PC-9 (cell line): ENCODE measurements at regions of chr4 and their contacts with region 1.

Region 1: GRCh38 chr4:113434247-113434587 is 327.3 kb downstream of the CAMK2D start:
- DNase-seq: no peak
- H3K4me3 ChIP-seq: no peak overlapping the region
- H3K27ac ChIP-seq: no peak overlapping the region
- H3K4me1 ChIP-seq: no peaks in the 10 kb centered on the region
- H3K27me3 ChIP-seq: no peaks in the 10 kb centered on the region
- CTCF ChIP-seq: no peak

Region 2: GRCh38 chr4:113384600-113384999 is 49.6 kb before region 1 on chr4:
- CTCF ChIA-PET with region 1: no interaction called
- POLR2A ChIA-PET with region 1: no interaction called
- intact Hi-C with region 1: no loop called
- DNase-seq: no peak
- H3K4me3 ChIP-seq: no peak overlapping the region
- H3K27ac ChIP-seq: no peak overlapping the region
- H3K4me1 ChIP-seq: no peaks in the 10 kb centered on the region
- H3K27me3 ChIP-seq: no peaks in the 10 kb centered on the region
- CTCF ChIP-seq: no peak

Region 3: DNA sequence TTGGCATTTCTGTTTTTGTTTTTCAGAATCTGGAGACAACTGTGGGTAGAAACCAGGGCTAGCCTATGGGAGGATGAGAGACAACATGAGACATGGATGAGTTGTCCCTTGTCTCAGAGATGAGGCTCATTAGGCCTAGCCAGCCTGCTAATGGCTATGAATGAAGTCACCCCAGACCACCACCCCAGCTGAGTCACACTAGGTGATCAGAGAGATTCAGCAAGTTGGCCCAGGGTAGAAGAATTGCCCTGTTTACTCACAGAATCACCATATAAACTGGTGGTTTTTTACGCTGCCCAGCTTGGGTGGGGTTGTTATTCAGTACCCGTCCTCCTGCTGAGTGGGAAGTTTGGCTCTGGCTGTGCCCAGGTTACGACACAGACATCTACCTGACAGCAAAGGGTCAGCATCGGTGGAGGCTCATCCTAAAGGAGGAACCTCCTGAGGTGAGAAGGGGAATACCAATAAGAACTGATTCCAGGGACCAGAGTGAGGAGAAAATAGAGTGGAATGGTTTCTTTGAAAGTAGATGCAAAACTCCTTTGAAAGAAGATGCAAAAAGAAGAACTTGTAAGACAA is 562.5 kb after region 1 on chr4:
- CTCF ChIA-PET with region 1: interaction called, 14 read pairs
- POLR2A ChIA-PET with region 1: no interaction called
- intact Hi-C with region 1: no loop called
- DNase-seq: no peak
- H3K4me3 ChIP-seq: no peak overlapping the region
- H3K27ac ChIP-seq: no peak overlapping the region
- H3K4me1 ChIP-seq: no peaks in the 10 kb centered on the region
- H3K27me3 ChIP-seq: no peaks in the 10 kb centered on the region
- CTCF ChIP-seq: no peak